Aorta (tissue), 5 donors: ENCODE measurements at regions of chr11 and their contacts with region 1.

Region 1: DNA sequence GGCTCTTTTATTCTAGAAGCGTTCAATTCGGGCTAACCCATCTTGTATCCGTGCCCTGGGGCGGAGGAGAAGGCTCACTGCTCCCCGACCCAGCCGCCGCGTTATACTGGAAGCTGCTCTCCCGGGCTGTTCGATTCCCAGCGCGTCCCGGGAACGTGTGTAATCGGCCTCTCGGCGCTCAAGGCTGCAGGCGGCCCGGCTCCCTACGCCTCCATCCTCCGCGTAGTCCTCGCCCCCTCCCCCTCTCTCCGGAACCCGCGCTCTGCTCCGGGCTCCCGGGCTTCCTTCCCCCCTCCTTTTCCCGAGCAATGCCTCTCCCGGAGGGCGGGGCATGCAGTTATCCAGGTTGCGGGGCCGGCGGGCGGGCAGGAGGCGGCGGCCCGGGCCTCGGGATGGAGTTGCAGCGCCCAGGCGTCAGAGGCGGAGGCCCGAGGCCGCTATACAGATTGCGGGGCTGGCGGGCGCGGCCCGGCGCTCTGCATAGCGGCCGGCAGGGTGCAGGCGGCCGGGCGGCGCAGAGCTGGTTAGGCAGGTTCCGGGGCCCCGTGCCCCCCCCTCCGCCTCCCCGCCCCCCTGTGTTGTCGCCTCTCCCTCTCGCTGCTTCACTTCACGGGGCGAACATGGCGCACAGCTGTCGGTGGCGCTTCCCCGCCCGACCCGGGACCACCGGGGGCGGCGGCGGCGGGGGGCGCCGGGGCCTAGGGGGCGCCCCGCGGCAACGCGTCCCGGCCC is at the start of gene KMT2A:
- DNase-seq: peak; percentile 99
- ATAC-seq: peak; percentile 97
- H3K4me3 ChIP-seq: peak within 1 kb of the TSS; percentile 84 to 90
- H3K27ac ChIP-seq: peak within 1 kb of the TSS; percentile 60 to 91
- H3K4me1 ChIP-seq: peaks cover 0 to 6% of the 10 kb centered on the region in 2 donors
- H3K27me3 ChIP-seq: no peaks in the 10 kb centered on the region
- total RNA-seq, gene KMT2A: 105 to 114 TPM

Region 2: DNA sequence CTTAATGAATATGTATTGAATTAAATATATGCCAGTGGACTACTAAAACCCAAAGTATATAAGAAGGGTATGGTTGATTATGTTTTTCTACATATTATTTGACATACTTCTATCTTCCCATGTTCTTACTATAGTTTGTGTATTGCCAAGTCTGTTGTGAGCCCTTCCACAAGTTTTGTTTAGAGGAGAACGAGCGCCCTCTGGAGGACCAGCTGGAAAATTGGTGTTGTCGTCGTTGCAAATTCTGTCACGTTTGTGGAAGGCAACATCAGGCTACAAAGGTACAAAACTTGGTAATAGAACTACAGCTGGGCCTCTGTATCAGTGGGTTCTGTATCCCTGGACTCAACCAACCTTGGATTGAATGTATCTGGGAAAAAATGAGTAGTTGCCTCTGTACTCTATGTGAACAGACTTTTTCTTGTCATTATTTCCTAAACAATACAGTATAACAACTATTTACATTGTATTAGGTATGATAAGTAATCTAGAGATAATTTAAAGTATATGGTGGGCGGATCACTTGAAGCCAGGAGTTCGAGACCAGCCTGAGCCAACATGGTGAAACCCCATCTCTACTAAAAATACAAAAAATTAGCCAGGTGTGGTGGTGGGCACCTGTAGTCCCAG is 52.5 kb after region 1 on chr11:
- intact Hi-C with region 1: loop called in 1 of 2 experiments (anchors 5 kb)
- DNase-seq: peak; percentile 68 to 85
- ATAC-seq: peak; percentile 87
- H3K4me3 ChIP-seq: no peak overlapping the region
- H3K27ac ChIP-seq: no peak overlapping the region
- H3K4me1 ChIP-seq: no peaks in the 10 kb centered on the region
- H3K27me3 ChIP-seq: no peaks in the 10 kb centered on the region